Activated CD8-positive, alpha-beta memory T cell treated with anti-CD3 and anti-CD28 coated beads, Interleukin-2, amount 10 ng/mL, durations not matched to agents 7 days and 5 days (primary cell): ENCODE measurements at regions of chr15 and their contacts with region 1.

Region 1: GRCh38 chr15:100349696-100350433 is 8.1 kb upstream of the ADAMTS17 start:
- DNase-seq: peak; percentile 89
- ATAC-seq: peak; percentile 97
- H3K4me3 Mint-ChIP-seq: peak overlapping the region; percentile 77
- H3K27ac Mint-ChIP-seq: peak overlapping the region; percentile 79
- H3K4me1 Mint-ChIP-seq: peaks cover 6% of the 10 kb centered on the region
- H3K27me3 Mint-ChIP-seq: peaks cover 21% of the 10 kb centered on the region

Region 2: GRCh38 chr15:99928429-99928981 is 421.4 kb before region 1 on chr15:
- CTCF ChIA-PET with region 1: interaction called, 27 read pairs
- DNase-seq: peak; percentile 89
- ATAC-seq: peak; percentile 96
- H3K4me3 Mint-ChIP-seq: peak overlapping the region; percentile 75
- H3K27ac Mint-ChIP-seq: peak overlapping the region; percentile 68
- H3K4me1 Mint-ChIP-seq: peaks cover 13% of the 10 kb centered on the region
- H3K27me3 Mint-ChIP-seq: peaks cover 33% of the 10 kb centered on the region

Region 3: DNA sequence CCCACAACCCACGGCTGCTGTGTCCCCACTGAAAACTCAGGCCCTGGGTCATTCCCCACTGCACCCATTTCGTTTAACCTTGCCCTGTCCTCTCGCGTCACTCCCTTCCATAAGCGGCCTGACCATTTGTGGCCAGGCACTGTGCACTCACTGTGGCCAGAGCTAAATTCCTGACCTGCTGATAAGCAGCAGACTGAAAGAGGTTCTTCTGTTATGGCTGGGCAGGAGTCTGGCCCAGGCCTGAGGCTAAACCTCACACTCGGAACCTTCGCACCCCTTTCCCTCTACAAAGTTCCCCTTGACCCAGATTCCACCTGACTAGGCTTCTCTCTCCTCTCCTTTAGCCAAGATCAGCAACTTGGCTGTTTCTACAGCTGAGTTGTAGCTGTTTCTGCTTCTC is 70.4 kb before region 1 on chr15:
- CTCF ChIA-PET with region 1: no interaction called
- DNase-seq: no peak
- ATAC-seq: no peak
- H3K4me3 Mint-ChIP-seq: no peak overlapping the region
- H3K27ac Mint-ChIP-seq: no peak overlapping the region
- H3K4me1 Mint-ChIP-seq: no peaks in the 10 kb centered on the region
- H3K27me3 Mint-ChIP-seq: no peaks in the 10 kb centered on the region

Region 4: DNA sequence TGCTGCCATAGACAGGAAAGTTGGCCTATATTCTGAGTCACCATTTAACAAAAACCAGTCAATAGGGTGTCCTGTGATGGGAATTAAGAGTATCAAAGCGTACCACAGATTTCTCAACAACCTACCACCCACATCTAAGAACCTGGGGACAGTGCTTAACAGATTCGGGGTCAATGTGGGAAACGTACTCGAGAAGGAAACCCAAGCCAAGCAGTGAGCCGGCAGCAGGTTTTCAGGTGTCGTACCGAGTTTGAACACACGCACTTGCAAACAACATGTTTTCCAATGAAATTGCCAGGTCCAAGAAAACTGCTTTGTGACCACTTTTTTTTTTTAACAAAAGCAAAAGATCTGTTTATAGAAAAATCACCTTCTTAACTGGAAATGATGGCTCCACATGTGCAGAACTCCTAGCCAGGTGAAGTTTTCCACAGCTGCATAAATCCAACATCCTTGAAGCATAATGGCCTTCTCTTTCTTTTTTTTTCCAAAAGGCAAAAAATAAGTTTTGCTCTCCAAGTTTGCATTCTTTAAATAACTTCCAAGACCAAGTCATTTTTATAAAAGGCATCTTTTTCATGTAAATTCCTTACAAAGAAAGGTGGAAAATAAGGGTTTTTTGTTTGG is 53.8 kb before region 1 on chr15:
- CTCF ChIA-PET with region 1: no interaction called
- DNase-seq: no peak
- ATAC-seq: no peak
- H3K4me3 Mint-ChIP-seq: no peak overlapping the region
- H3K27ac Mint-ChIP-seq: no peak overlapping the region
- H3K4me1 Mint-ChIP-seq: peaks cover 1% of the 10 kb centered on the region
- H3K27me3 Mint-ChIP-seq: no peaks in the 10 kb centered on the region

Region 5: DNA sequence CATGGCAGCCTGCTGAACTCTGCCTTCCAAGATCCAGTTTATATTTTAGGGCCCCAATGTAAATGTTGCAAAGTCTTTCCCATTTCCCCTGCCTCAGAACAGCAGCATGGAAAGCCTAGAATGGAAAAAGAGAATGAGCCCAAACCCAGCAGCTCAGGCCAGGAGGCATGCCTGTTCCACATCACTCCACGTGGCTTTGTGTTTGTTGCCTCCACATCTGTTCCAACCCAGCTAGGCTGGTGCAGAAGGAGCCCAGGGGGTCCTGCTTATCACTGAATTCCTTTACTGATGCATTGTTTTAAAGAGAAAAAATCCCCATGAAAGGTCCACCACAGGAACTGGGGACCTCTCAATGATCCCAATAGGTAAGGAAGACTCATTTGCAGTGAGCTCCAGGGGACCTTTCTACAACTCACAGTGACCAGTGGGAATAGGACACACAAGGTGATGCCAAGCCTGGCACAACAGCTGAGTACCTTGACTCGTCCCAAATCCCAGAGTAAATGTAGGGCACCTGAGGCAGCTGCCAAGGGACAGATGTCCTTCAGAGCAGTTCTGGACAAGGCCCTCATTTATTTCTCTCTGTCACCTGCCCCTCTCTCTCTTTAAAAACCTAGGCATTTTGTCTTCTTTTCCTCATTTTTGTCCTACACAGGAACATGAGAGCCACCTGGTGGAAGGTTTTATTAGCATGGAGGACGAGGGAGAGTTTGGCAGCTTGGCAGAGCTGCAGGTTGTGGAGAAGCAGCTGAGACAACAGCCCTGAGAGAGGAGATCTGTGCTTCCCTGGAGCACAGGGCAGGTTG is 33.6 kb after region 1 on chr15:
- CTCF ChIA-PET with region 1: interaction called, 25 read pairs
- DNase-seq: no peak
- ATAC-seq: no peak
- H3K4me3 Mint-ChIP-seq: no peak overlapping the region
- H3K27ac Mint-ChIP-seq: no peak overlapping the region
- H3K4me1 Mint-ChIP-seq: no peaks in the 10 kb centered on the region
- H3K27me3 Mint-ChIP-seq: peaks cover 4% of the 10 kb centered on the region

Region 6: DNA sequence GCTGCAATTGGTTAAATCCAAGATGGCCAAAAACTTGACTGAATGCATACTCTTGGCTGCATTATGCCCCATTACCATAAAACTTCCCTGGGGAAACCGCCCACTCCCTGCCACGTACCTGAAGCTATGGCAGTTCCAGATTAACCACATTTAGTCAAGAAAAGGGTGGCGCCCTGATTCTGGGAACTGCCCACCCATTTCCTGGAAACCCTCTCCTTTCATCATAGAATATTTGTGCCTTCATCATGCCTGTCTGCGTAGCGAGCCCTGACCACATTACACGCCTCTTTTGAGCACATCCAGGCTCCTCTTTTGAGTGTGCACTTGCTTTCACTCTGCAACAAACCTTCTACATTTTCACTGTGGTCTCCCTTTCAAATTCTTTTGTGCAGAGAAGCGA is 246.9 kb after region 1 on chr15:
- CTCF ChIA-PET with region 1: interaction called, 31 read pairs
- DNase-seq: peak; percentile 98
- ATAC-seq: peak; percentile 87
- H3K4me3 Mint-ChIP-seq: peak overlapping the region; percentile 80
- H3K27ac Mint-ChIP-seq: peak overlapping the region; percentile 99
- H3K4me1 Mint-ChIP-seq: peaks cover 66% of the 10 kb centered on the region
- H3K27me3 Mint-ChIP-seq: no peaks in the 10 kb centered on the region

Region 7: DNA sequence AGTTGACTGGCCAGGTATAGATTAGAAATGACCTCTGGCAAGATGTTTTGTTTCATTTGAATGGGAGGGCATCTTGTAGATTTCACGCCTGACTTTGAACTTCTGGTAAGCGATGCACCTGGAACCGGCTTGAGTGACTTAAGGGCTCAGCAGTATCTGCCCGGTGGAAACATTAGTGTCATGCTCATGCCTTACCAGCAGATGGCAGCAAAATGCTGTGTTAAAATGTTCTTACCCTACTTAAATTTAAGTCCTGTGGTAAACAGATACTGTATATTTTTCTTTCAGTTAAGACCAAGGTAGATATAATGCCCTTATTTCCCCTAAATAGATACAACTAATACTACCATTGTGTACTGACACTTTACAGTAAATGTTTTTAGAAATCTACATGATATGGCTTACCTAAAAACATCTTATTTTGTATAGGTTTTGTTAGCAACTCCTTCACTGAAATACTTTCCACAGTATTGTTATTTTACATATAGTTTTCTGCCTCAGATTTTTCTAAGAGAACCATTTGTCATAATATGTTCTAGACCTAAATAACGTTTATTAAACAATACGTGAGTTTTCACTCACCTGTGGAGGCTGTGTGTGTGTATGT is 278.0 kb after region 1 on chr15:
- CTCF ChIA-PET with region 1: interaction called, 11 read pairs
- DNase-seq: peak; percentile 75
- ATAC-seq: peak; percentile 89
- H3K4me3 Mint-ChIP-seq: no peak overlapping the region
- H3K27ac Mint-ChIP-seq: no peak overlapping the region
- H3K4me1 Mint-ChIP-seq: peaks cover 2% of the 10 kb centered on the region
- H3K27me3 Mint-ChIP-seq: no peaks in the 10 kb centered on the region